Posterior vena cava (tissue), 2 donors: ENCODE measurements at regions of chr18 and their contacts with region 1.

Region 1: GRCh38 chr18:58314284-58314683 is 270.3 kb downstream of the NEDD4L start:
- DNase-seq: no peak

Region 2: DNA sequence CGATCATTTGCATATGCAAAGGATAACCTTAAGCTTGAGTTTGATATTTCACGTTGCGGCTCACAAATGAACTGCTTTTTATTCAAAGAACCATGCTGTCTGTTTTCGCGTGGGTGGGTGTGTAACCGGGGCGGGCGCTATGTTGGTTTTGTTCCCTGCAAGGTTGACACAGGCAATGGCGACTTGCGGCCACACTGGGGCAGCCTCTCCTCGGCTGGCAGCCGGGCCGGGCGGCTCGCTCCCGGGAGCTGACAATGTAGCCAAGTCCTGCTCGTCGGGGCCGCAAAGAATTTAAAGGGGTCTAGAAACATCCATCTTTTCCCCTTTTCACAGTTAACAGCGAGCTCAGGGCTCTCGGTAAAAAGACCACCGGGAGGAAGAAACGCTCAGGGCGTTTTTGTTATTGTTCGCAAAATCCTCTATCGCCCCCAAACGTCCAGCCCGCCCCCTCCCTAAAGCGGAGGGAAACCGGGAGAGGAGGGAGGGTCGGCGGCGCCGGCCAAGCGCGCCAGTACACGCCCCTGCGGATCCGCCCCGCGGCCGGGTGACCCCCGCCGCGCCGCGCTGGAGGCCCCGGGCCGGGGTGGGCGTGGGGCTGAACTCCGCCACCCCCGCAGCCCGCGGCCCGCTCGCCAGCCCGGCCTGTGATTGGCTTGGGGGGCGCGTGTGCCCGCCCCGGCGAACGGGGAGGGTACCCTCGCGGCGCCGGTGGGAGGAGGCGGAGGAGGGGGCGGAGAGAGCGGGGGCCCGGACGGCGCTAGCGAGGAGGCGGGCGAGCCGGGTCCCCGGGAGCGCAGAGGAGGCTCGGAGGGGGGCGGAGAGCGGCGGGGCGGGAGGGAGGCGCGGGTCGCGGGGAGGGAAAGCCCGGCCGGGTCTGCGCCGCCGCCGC is 270.5 kb before region 1 on chr18 and contains the start of gene NEDD4L:
- intact Hi-C with region 1: loop called in 1 of 2 experiments (anchors 10 kb)
- DNase-seq: peak; percentile 94
- total RNA-seq, gene NEDD4L: 11.3 to 14.9 TPM

Region 3: GRCh38 chr18:58223717-58224424 is 90.4 kb before region 1 on chr18:
- intact Hi-C with region 1: loop called in 1 of 2 experiments (anchors 10 kb)
- DNase-seq: no peak